Right lobe of liver (tissue), 6 donors: ENCODE measurements at regions of chr15 and their contacts with region 1.

Region 1: DNA sequence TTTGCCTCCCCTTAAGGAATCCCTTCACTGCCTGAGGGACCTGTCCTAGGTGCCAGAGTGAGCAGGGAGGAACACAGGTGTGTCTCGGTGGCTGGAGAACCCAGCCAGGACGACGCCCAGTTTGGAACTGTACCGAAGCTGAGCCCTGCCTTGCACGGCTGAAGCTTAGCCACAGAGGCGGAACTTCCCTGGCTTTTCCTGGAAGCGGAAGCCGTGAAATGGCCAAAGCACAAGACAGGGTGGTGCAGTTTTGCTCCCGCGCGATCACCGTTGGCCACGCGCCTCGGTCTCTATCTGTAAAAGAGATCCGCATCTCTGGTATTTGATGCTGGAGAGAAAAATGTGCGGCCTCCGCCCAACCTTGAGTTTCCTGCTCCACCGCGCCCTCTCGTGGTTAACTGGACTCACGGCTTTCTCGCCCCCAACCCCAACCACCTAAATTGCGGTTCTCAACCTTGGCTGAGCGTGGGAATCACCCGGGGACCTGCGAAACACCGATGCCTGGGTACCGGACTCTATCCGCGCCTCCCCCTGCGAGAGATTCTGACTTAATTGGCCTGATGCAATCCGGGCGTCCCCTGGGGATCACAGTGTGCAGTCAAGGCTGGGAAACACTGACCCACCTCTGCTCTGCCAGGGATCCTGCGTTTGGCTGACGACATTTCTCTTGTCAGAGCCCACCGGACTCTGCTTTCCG is 70.7 kb upstream of the ABHD2 start:
- DNase-seq: peak; percentile 61 to 66 (median 65)
- ATAC-seq: peak; percentile 80 to 86 (median 84)
- H3K4me3 ChIP-seq: peak overlapping the region in 1 of 3 donors; percentile 9
- H3K27ac ChIP-seq: no peak overlapping the region
- H3K4me1 ChIP-seq: no peaks in the 10 kb centered on the region
- H3K27me3 ChIP-seq: peaks cover 0 to 8% of the 10 kb centered on the region in 2 donors
- CTCF ChIP-seq: peak; percentile 71 to 78 (median 73)
- POLR2A ChIP-seq: no peak

Region 2: GRCh38 chr15:88904624-88905327 is 112.7 kb before region 1 on chr15:
- intact Hi-C with region 1: loop called (anchors 5 kb)
- DNase-seq: peak; percentile 76 to 81 (median 79)
- ATAC-seq: peak; percentile 88 to 97 (median 94)
- H3K4me3 ChIP-seq: no peak overlapping the region
- H3K27ac ChIP-seq: no peak overlapping the region
- H3K4me1 ChIP-seq: no peaks in the 10 kb centered on the region
- H3K27me3 ChIP-seq: no peaks in the 10 kb centered on the region
- CTCF ChIP-seq: peak; percentile 95 to 98 (median 96)
- POLR2A ChIP-seq: no peak